PC-3 (cell line): ENCODE measurements at regions of chrX and their contacts with region 1.

Region 1: GRCh38 chrX:45710081-45710801 is 509.6 kb upstream of the DIPK2B start:
- DNase-seq: peak; percentile 96
- ATAC-seq: peak; percentile 68
- H3K4me3 ChIP-seq: no peak overlapping the region
- H3K27ac ChIP-seq: peak overlapping the region; percentile 100
- H3K4me1 ChIP-seq: peaks cover 62% of the 10 kb centered on the region
- H3K27me3 ChIP-seq: no peaks in the 10 kb centered on the region
- CTCF ChIP-seq: no peak

Region 2: GRCh38 chrX:45472968-45473367 is 237.3 kb before region 1 on chrX:
- CTCF ChIA-PET with region 1: no interaction called
- POLR2A ChIA-PET with region 1: no interaction called
- intact Hi-C with region 1: loop called (anchors 1 kb)
- DNase-seq: peak; percentile 88
- ATAC-seq: peak; percentile 77
- H3K4me3 ChIP-seq: peak overlapping the region; percentile 19; the same call in 1 of the 2 replicates
- H3K27ac ChIP-seq: peak overlapping the region; percentile 100
- H3K4me1 ChIP-seq: peaks cover 62% of the 10 kb centered on the region
- H3K27me3 ChIP-seq: no peaks in the 10 kb centered on the region
- CTCF ChIP-seq: no peak

Region 3: DNA sequence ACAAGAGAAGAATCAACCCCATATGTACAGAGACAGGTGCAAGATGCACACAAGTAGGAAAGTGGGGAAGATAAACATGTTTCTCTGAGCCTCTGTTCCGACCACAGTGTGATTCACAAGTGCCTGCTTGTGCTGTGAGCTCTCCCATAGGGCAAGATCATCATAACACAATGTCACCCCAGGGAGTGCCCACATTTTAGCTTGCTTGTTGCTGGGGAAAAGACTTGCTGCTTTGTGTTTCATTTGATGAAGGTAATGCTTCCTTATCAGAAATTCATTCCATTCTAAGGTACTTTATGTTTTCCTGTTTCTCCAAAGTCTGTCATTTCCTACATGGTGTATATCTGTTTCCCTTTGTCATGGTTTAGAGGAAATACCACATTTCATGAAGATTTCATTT is 205.0 kb before region 1 on chrX:
- CTCF ChIA-PET with region 1: no interaction called
- POLR2A ChIA-PET with region 1: interaction called, 6 read pairs
- intact Hi-C with region 1: loop called (anchors 2 kb)
- DNase-seq: peak; percentile 32
- ATAC-seq: no peak
- H3K4me3 ChIP-seq: no peak overlapping the region
- H3K27ac ChIP-seq: peak overlapping the region; percentile 100
- H3K4me1 ChIP-seq: peaks cover 43% of the 10 kb centered on the region
- H3K27me3 ChIP-seq: no peaks in the 10 kb centered on the region
- CTCF ChIP-seq: no peak

Region 4: GRCh38 chrX:45621376-45622041 is 88.7 kb before region 1 on chrX:
- CTCF ChIA-PET with region 1: no interaction called
- POLR2A ChIA-PET with region 1: interaction called, 4 read pairs
- intact Hi-C with region 1: loop called (anchors 2 kb)
- DNase-seq: peak; percentile 78
- ATAC-seq: peak; percentile 85
- H3K4me3 ChIP-seq: no peak overlapping the region
- H3K27ac ChIP-seq: peak overlapping the region; percentile 79
- H3K4me1 ChIP-seq: peaks cover 26% of the 10 kb centered on the region
- H3K27me3 ChIP-seq: no peaks in the 10 kb centered on the region
- CTCF ChIP-seq: no peak

Region 5: GRCh38 chrX:45749375-45749774 is 39.1 kb after region 1 on chrX:
- CTCF ChIA-PET with region 1: no interaction called
- POLR2A ChIA-PET with region 1: interaction called, 29 read pairs
- intact Hi-C with region 1: loop called (anchors 2 kb)
- DNase-seq: peak; percentile 60
- ATAC-seq: peak; percentile 14
- H3K4me3 ChIP-seq: no peak overlapping the region
- H3K27ac ChIP-seq: peak overlapping the region; percentile 77
- H3K4me1 ChIP-seq: peaks cover 95% of the 10 kb centered on the region
- H3K27me3 ChIP-seq: no peaks in the 10 kb centered on the region
- CTCF ChIP-seq: peak; percentile 64; the same call in 1 of the 2 replicates